ENCODE measurements at regions of chrX and their contacts with region 1.

Region 1: GRCh38 chrX:44244008-44244407 is 99.5 kb downstream of the EFHC2 start:
- DNase-seq: no peak
- ATAC-seq: no peak
- H3K4me3 Mint-ChIP-seq: no peak overlapping the region
- H3K27ac Mint-ChIP-seq: no peak overlapping the region
- H3K4me1 Mint-ChIP-seq: peaks cover 7% of the 10 kb centered on the region
- H3K27me3 Mint-ChIP-seq: no peaks in the 10 kb centered on the region

Region 2: GRCh38 chrX:43958529-43958928 is 285.5 kb before region 1 on chrX:
- CTCF ChIA-PET with region 1: interaction called, 38 read pairs
- POLR2A ChIA-PET with region 1: no interaction called
- DNase-seq: peak; percentile 28
- ATAC-seq: peak; percentile 47
- H3K4me3 Mint-ChIP-seq: no peak overlapping the region
- H3K27ac Mint-ChIP-seq: no peak overlapping the region
- H3K4me1 Mint-ChIP-seq: peaks cover 2% of the 10 kb centered on the region
- H3K27me3 Mint-ChIP-seq: no peaks in the 10 kb centered on the region